Mucosa of descending colon (tissue), 3 donors: ENCODE measurements at regions of chr5 and their contacts with region 1.

Region 1: DNA sequence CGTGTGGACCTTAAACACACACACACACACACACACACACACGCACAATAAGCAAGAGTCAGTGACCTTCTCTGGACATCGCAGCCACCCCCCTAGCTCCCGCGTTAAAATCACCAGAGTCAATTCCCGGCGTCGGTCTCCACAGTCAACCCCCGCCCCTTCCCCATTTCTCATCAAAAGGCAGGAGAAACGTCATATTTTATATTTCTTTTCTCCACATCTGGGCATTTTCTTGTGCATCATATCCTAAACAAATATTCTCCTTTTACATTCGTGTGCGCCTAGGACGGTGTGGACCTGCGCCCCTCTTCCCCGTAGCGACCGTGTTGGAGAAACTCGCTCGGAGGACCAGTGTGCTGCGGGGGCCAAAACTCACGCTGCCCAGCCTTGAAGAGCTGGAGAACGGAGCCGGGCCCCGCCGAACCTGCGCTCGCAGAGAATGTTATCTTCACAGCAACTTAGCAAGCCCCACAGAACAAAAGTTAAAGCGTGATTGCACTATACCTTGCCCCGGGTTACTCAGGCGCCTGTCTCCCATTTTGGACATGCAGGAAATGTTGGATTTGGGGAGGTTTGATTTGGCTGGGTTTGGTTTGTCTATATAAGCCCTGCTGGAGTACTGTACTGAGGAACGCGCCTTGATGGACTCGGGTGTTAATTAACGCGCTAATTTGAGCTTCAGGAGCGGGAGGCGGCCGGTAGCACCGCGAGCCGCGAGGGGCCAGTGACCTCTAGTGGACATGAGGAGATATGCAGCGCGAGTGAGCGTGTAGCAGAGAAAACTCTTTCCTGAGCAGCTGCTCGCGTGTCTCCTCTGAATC is 192.4 kb downstream of the MEF2C start:
- DNase-seq: peak; percentile 68 to 78 (median 74)
- ATAC-seq: peak; percentile 93
- H3K4me3 ChIP-seq: no peak overlapping the region
- H3K4me1 ChIP-seq: peaks cover 12% of the 10 kb centered on the region
- CTCF ChIP-seq: peak; percentile 90

Region 2: GRCh38 chr5:87780831-87781760 is 909.5 kb before region 1 on chr5:
- intact Hi-C with region 1: loop called (anchors 5 kb)
- DNase-seq: peak; percentile 54 to 76 (median 75)
- ATAC-seq: peak; percentile 96
- H3K4me3 ChIP-seq: no peak overlapping the region
- H3K4me1 ChIP-seq: no peaks in the 10 kb centered on the region
- CTCF ChIP-seq: peak; percentile 78

Region 3: GRCh38 chr5:88892669-88893068 is 202.1 kb after region 1 on chr5:
- intact Hi-C with region 1: no loop called
- DNase-seq: no peak
- ATAC-seq: no peak
- H3K4me3 ChIP-seq: no peak overlapping the region
- H3K4me1 ChIP-seq: no peaks in the 10 kb centered on the region
- CTCF ChIP-seq: no peak